ENCODE measurements at regions of chr21 and their contacts with region 1.

Region 1: DNA sequence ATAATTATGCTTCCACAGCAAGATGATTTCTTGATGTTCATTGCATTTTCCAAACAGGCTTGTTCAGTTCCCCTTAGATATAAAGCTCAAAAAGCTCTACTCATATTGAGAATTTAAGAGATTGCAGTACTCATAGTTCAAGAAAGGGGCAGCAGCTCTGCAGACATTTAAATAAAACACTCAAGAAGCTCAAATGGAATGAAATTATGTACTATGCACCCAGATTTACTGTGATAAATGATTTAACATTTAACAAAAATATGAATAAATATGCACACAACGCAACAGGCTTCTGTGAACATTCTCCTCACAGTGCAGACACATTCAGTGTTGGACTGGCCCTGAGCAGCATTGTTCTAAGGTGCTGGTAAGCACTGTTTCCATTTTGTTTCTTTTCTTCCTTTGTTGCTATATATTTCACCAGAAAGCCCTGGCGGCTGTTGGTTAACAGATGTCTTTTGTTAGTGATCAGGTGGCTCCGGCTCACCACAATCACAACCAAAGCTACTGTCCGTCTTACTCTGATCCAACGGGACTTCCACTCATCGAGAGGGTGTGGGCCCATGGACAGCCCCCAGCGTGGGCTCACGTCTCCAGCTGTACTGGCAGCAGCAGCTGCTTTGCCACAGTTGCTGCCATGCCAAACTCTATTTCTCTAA is 1440.3 kb downstream of the NCAM2 start:
- DNase-seq: no peak
- ATAC-seq: no peak
- H3K4me3 ChIP-seq: no peak overlapping the region
- H3K27ac ChIP-seq: no peak overlapping the region
- H3K4me1 ChIP-seq: no peaks in the 10 kb centered on the region
- H3K27me3 ChIP-seq: no peaks in the 10 kb centered on the region
- CTCF ChIP-seq: no peak

Region 2: GRCh38 chr21:22476726-22477646 is 38.4 kb after region 1 on chr21:
- intact Hi-C with region 1: loop called in 1 of 10 experiments (anchors 1 kb)
- DNase-seq: no peak
- ATAC-seq: no peak
- H3K4me3 ChIP-seq: no peak overlapping the region
- H3K27ac ChIP-seq: no peak overlapping the region
- H3K4me1 ChIP-seq: no peaks in the 10 kb centered on the region
- H3K27me3 ChIP-seq: no peaks in the 10 kb centered on the region
- CTCF ChIP-seq: no peak

Measured in heart right ventricle (tissue), 16 donors.